Activated CD8-positive, alpha-beta T cell treated with anti-CD3 and anti-CD28 coated beads, Interleukin-2, amount 10 ng/mL, durations not matched to agents 7 days and 5 days (primary cell): ENCODE measurements at regions of chr14 and their contacts with region 1.

Region 1: DNA sequence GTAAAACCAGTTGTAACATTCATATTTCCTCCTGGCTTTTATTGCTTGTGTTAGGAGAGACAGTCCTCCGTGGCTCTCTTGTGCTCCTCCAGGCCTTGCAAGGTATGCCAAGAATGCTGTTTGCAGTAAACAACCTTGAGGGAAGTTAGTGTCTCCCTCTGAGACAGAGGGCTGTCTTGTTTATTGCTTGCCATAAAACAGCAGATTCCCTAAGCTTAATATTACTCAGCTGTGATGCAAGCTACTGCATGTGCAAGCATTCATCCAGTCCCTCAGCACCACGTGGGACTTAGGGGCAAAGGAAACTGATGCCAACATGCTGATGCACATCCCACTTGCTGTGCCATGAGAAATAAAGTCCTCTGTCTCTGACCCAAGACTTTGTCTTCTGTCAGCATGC is 6.6 kb downstream of the POMT2 start:
- DNase-seq: no peak
- ATAC-seq: no peak
- H3K4me3 Mint-ChIP-seq: no peak overlapping the region
- H3K27ac Mint-ChIP-seq: no peak overlapping the region
- H3K4me1 Mint-ChIP-seq: peaks cover 4% of the 10 kb centered on the region
- H3K27me3 Mint-ChIP-seq: no peaks in the 10 kb centered on the region

Region 2: DNA sequence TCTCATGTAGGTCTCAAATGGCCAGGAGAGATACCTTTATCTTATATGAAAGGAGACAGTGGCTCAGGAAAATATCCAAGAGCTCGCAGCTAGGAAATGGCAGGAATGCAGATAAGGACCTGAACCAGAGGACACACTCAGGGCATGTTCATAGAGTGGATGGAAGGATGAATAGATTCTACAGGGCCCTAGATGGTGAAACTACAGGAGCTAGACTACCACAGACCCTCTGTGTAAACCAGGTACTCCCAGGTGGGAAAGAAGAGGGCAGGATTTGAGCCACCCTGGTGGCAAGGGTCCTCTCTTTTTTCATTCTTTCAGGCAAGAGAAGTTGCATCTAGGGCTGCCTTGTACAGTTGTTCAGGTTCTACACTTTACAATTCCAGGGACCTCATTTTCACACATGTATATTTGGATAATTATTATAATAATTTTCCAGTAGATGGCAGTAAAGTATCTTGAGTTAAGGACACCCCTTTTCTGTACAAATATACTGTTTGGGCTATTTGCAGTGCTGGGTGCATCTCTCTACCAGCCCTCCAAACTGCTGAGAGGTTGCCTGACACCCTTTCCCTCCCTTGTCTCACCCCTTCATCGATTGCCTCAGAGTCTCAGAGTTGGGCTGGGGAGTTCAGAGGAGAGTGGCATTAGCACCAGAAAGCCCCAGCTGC is 162.0 kb before region 1 on chr14:
- CTCF ChIA-PET with region 1: interaction called, 108 read pairs
- POLR2A ChIA-PET with region 1: no interaction called
- DNase-seq: no peak
- ATAC-seq: peak; percentile 63
- H3K4me3 Mint-ChIP-seq: no peak overlapping the region
- H3K27ac Mint-ChIP-seq: no peak overlapping the region
- H3K4me1 Mint-ChIP-seq: no peaks in the 10 kb centered on the region
- H3K27me3 Mint-ChIP-seq: peaks cover 26% of the 10 kb centered on the region

Region 3: GRCh38 chr14:77301103-77301502 is 12.9 kb before region 1 on chr14:
- CTCF ChIA-PET with region 1: interaction called, 214 read pairs
- POLR2A ChIA-PET with region 1: no interaction called
- DNase-seq: peak; percentile 73
- ATAC-seq: peak; percentile 57
- H3K4me3 Mint-ChIP-seq: no peak overlapping the region
- H3K27ac Mint-ChIP-seq: no peak overlapping the region
- H3K4me1 Mint-ChIP-seq: peaks cover 15% of the 10 kb centered on the region
- H3K27me3 Mint-ChIP-seq: no peaks in the 10 kb centered on the region

Region 4: DNA sequence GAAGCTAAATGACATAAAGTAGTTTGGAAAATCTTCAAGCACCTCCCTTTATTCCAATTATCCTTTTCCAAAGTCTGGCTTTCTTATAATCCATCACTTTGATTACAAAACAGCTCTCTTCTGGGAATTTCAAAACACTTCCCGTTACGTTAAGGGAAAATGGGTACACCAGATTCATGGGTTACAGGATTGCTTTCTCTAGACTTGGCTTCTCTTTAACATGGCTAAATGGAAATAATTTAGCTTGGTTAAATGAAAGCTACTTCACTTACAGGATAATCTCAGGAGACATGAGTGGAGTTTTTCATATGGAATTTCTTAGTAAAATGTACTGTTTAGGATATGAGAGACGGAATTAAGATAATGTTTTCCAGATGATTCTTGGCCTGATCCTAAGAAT is 21.5 kb after region 1 on chr14:
- CTCF ChIA-PET with region 1: interaction called, 10 read pairs
- POLR2A ChIA-PET with region 1: no interaction called
- DNase-seq: no peak
- ATAC-seq: no peak
- H3K4me3 Mint-ChIP-seq: no peak overlapping the region
- H3K27ac Mint-ChIP-seq: no peak overlapping the region
- H3K4me1 Mint-ChIP-seq: peaks cover 6% of the 10 kb centered on the region
- H3K27me3 Mint-ChIP-seq: no peaks in the 10 kb centered on the region

Region 5: DNA sequence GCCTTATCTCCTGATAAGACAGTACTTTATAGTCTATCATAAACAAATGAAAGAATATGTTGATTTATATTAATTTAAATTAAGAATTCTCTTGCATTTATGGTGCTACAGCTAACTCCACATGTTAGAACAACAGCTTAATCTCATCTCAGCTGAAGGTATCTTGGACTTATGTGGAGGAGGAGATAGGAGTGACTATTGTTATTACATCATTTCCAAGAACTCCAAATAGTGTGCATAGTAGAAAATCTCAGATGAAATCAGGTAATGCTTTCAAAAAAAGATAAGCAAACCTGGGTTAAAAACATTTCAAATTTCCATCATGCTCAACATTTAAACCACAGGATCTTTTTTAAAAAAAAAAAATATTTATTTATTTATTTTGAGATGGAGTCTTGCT is 215.9 kb after region 1 on chr14:
- CTCF ChIA-PET with region 1: no interaction called
- POLR2A ChIA-PET with region 1: no interaction called
- DNase-seq: no peak
- ATAC-seq: no peak
- H3K4me3 Mint-ChIP-seq: no peak overlapping the region
- H3K27ac Mint-ChIP-seq: no peak overlapping the region
- H3K4me1 Mint-ChIP-seq: peaks cover 11% of the 10 kb centered on the region
- H3K27me3 Mint-ChIP-seq: no peaks in the 10 kb centered on the region